Calu3 (cell line): ENCODE measurements at regions of chr11 and their contacts with region 1.

Region 1: GRCh38 chr11:123559523-123559955 is 94.9 kb downstream of the SCN3B start:
- DNase-seq: no peak
- H3K4me3 Mint-ChIP-seq: peak overlapping the region; percentile 65
- H3K27ac Mint-ChIP-seq: no peak overlapping the region
- H3K4me1 Mint-ChIP-seq: peaks cover 8% of the 10 kb centered on the region
- H3K27me3 Mint-ChIP-seq: peaks cover 69% of the 10 kb centered on the region
- CTCF ChIP-seq: no peak

Region 2: GRCh38 chr11:123434262-123434661 is 125.3 kb before region 1 on chr11:
- CTCF ChIA-PET with region 1: interaction called, 10 read pairs
- intact Hi-C with region 1: no loop called
- DNase-seq: peak; percentile 12
- H3K4me3 Mint-ChIP-seq: no peak overlapping the region
- H3K27ac Mint-ChIP-seq: no peak overlapping the region
- H3K4me1 Mint-ChIP-seq: no peaks in the 10 kb centered on the region
- H3K27me3 Mint-ChIP-seq: peaks cover 63% of the 10 kb centered on the region
- CTCF ChIP-seq: no peak

Region 3: DNA sequence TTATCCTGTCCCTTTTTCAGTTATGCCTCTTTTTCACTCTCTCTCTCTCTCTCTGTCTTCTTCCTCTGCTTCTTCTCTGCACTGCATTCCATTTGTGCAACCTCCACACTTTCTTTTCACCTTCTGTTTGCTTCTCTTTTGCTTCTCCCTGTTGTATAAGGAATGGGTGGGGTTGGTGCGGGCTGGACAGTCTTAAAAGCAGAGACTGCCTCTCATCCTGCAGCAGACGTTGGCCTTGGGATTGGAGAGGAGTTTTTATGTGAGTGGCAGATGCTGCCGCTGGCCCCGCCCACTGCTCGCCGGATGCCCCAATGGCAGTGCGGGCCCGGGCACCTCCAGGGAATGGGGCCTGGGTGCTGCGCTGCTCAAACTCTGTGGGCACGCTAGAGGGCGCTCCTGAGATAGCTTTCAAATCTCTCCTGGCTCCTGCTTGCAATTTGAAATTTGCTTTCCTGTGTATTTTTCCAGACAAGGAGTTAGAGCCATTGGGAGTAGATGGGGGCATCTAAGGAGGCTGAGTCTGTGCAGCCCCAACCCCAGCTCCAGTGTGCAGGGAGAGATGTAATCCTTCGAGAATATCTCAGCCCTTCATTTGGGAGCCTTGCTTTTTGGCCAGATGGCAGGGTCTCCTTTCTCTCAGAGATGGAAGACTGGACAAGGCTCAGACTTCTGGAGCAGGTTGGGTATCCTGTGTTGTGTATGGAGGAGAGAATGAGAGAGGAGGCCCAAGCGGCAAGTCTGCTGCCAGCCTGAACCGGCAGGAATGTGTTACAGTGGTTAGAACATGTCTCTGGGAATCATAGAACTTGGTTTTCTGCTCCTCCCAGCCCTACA is 48.3 kb before region 1 on chr11:
- CTCF ChIA-PET with region 1: no interaction called
- intact Hi-C with region 1: loop called (anchors 5 kb)
- DNase-seq: peak; percentile 81
- H3K4me3 Mint-ChIP-seq: no peak overlapping the region
- H3K27ac Mint-ChIP-seq: no peak overlapping the region
- H3K4me1 Mint-ChIP-seq: peaks cover 8% of the 10 kb centered on the region
- H3K27me3 Mint-ChIP-seq: peaks cover 85% of the 10 kb centered on the region
- CTCF ChIP-seq: peak; percentile 74